GM12878 (cell line): ENCODE measurements at regions of chr1 and their contacts with region 1.

Region 1: DNA sequence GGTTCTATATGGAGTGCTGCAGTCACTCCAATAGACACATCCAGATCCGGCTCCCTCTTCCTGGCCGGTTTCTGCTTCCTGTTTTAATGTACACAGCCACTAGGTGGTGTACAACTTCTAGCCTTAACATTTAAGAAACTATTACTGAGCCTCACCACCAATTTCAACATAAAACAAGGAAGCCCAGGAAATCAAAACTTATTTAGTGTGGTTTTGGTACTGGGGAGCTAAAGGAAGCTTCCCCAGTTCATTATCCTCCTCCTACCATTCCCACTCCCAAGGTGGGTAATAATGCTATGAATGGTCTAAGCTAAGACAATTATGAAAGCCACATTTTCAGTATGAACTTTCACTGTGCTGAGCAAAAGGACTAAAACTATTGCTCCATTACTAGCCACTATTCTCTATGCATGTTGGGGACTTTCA is 25.5 kb upstream of the MTMR11 start:
- DNase-seq: peak; percentile 34
- ATAC-seq: peak; percentile 92
- H3K4me3 ChIP-seq: no peak overlapping the region
- H3K27ac ChIP-seq: peak overlapping the region; percentile 2
- H3K4me1 ChIP-seq: peaks cover 4% of the 10 kb centered on the region
- H3K27me3 ChIP-seq: no peaks in the 10 kb centered on the region
- CTCF ChIP-seq: peak; percentile 50 to 73 (median 71); a peak in 5 of 6 replicates
- EP300 ChIP-seq: no peak
- POLR2A ChIP-seq: no peak
- RAD21 ChIP-seq: peak; percentile 90

Region 2: GRCh38 chr1:149886396-149887195 is 75.5 kb before region 1 on chr1:
- CTCF ChIA-PET with region 1: interaction called, 20 read pairs
- POLR2A ChIA-PET with region 1: interaction called, 4 read pairs
- RAD21 ChIA-PET with region 1: interaction called, 6 read pairs
- SMC1A ChIA-PET with region 1: interaction called, 12 read pairs
- in situ Hi-C with region 1: no loop called
- intact Hi-C with region 1: no loop called
- DNase-seq: peak; percentile 99
- ATAC-seq: peak; percentile 73
- H3K4me3 ChIP-seq: peak overlapping the region; percentile 65
- H3K27ac ChIP-seq: peak overlapping the region; percentile 93
- H3K4me1 ChIP-seq: no peaks in the 10 kb centered on the region
- H3K27me3 ChIP-seq: no peaks in the 10 kb centered on the region
- CTCF ChIP-seq: no peak
- EP300 ChIP-seq: no peak
- POLR2A ChIP-seq: peak; percentile 70
- RAD21 ChIP-seq: no peak

Region 3: DNA sequence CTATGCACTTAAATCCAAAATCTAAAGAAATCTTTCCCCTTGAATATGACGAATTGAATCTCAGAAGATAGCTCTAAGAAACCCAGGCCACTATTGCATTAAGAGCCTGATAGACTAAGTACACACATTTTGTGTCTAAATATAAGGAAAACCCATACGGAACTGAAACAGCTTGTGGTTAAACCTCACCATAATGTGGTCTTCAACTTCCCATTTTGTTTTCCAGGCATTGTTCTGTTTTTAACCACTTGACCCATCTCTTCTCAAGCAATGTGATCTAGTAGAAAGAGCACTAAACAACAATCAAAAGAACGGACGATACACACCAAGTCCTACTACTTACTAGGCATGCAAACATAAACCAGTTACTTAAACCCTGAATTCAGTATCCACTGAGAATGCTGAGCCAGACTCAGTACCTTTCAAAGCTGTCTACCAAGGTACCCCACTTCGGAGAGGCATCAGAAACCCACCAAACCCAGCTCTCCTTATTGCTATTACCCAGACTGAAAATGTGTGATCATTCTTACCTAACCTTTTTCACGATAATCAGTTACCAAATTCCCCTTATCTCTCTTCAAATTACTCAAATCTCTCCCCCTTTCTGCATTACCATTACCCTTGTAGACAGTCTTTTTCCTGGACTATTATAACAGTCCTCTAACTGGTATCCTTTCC is 35.6 kb after region 1 on chr1:
- CTCF ChIA-PET with region 1: interaction called, 13 read pairs
- POLR2A ChIA-PET with region 1: interaction called, 3 read pairs
- RAD21 ChIA-PET with region 1: interaction called, 4 read pairs
- SMC1A ChIA-PET with region 1: interaction called, 10 read pairs
- in situ Hi-C with region 1: no loop called
- intact Hi-C with region 1: no loop called
- DNase-seq: peak; percentile 97
- ATAC-seq: peak; percentile 89
- H3K4me3 ChIP-seq: peak overlapping the region; percentile 39
- H3K27ac ChIP-seq: peak overlapping the region; percentile 55
- H3K4me1 ChIP-seq: peaks cover 31% of the 10 kb centered on the region; the same call in 1 of the 2 replicates
- H3K27me3 ChIP-seq: no peaks in the 10 kb centered on the region
- CTCF ChIP-seq: no peak
- EP300 ChIP-seq: peak; percentile 86 to 94; a peak in 3 of 4 replicates
- POLR2A ChIP-seq: no peak
- RAD21 ChIP-seq: no peak

Region 4: DNA sequence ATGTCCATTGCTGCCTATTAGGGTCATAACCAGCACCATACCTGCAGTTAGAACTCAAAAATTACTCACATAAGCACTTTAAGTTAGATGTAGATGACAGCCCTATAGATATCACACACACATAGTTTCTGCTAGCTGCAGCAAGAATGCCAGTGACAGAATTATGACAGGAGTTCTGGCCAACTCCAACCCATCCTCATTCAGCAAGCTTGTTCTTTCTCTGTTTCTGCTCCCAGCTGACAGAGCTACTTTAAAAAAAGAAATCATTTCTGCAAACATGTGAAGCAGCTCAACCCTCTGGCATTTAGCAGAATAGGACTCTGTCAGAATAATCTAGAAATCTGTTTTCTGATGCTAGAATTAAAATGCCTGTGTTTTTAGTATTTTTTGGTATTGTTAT is 72.2 kb after region 1 on chr1:
- CTCF ChIA-PET with region 1: interaction called, 22 read pairs
- POLR2A ChIA-PET with region 1: no interaction called
- RAD21 ChIA-PET with region 1: interaction called, 4 read pairs
- SMC1A ChIA-PET with region 1: interaction called, 5 read pairs
- in situ Hi-C with region 1: no loop called
- intact Hi-C with region 1: no loop called
- DNase-seq: no peak
- ATAC-seq: no peak
- H3K4me3 ChIP-seq: no peak overlapping the region
- H3K27ac ChIP-seq: no peak overlapping the region
- H3K4me1 ChIP-seq: no peaks in the 10 kb centered on the region
- H3K27me3 ChIP-seq: no peaks in the 10 kb centered on the region
- CTCF ChIP-seq: no peak
- EP300 ChIP-seq: no peak
- POLR2A ChIP-seq: no peak
- RAD21 ChIP-seq: no peak

Region 5: GRCh38 chr1:150067184-150068036 is 105.3 kb after region 1 on chr1 and contains the start of gene VPS45:
- CTCF ChIA-PET with region 1: interaction called, 8 read pairs
- POLR2A ChIA-PET with region 1: no interaction called
- RAD21 ChIA-PET with region 1: interaction called, 10 read pairs
- SMC1A ChIA-PET with region 1: interaction called, 9 read pairs
- in situ Hi-C with region 1: no loop called
- intact Hi-C with region 1: no loop called
- DNase-seq: peak; percentile 71
- ATAC-seq: peak; percentile 98
- H3K4me3 ChIP-seq: peak within 1 kb of the TSS; percentile 84
- H3K27ac ChIP-seq: peak within 1 kb of the TSS; percentile 97
- H3K4me1 ChIP-seq: peaks cover 9% of the 10 kb centered on the region; the same call in 1 of the 2 replicates
- H3K27me3 ChIP-seq: no peaks in the 10 kb centered on the region
- CTCF ChIP-seq: peak; percentile 34 to 44 (median 38); a peak in 4 of 6 replicates
- EP300 ChIP-seq: peak; percentile 13 to 36; a peak in 2 of 4 replicates
- POLR2A ChIP-seq: peak; percentile 86
- RAD21 ChIP-seq: 0 out of 2 replicates have a peak, but pooled peaks have one; percentile 18
- polyA plus RNA-seq, gene VPS45: 24.4 to 28.7 TPM

Region 6: GRCh38 chr1:150162862-150163706 is 200.9 kb after region 1 on chr1:
- CTCF ChIA-PET with region 1: interaction called, 35 read pairs
- POLR2A ChIA-PET with region 1: interaction called, 3 read pairs
- RAD21 ChIA-PET with region 1: interaction called, 19 read pairs
- SMC1A ChIA-PET with region 1: interaction called, 15 read pairs
- in situ Hi-C with region 1: loop called (anchors 5 kb)
- intact Hi-C with region 1: loop called (anchors 1 kb)
- DNase-seq: peak; percentile 97
- ATAC-seq: peak; percentile 66
- H3K4me3 ChIP-seq: peak overlapping the region; percentile 56
- H3K27ac ChIP-seq: peak overlapping the region; percentile 100
- H3K4me1 ChIP-seq: peaks cover 80% of the 10 kb centered on the region
- H3K27me3 ChIP-seq: no peaks in the 10 kb centered on the region
- CTCF ChIP-seq: no peak
- EP300 ChIP-seq: peak in 1 of 2 experiments; percentile 17; a peak in 1 of 4 replicates
- POLR2A ChIP-seq: peak; percentile 84
- RAD21 ChIP-seq: no peak

Region 7: GRCh38 chr1:150186789-150187559 is 224.8 kb after region 1 on chr1:
- CTCF ChIA-PET with region 1: interaction called, 25 read pairs
- POLR2A ChIA-PET with region 1: interaction called, 4 read pairs
- RAD21 ChIA-PET with region 1: interaction called, 16 read pairs
- SMC1A ChIA-PET with region 1: interaction called, 17 read pairs
- in situ Hi-C with region 1: no loop called
- intact Hi-C with region 1: loop called (anchors 5 kb)
- DNase-seq: no peak
- ATAC-seq: peak; percentile 91
- H3K4me3 ChIP-seq: no peak overlapping the region
- H3K27ac ChIP-seq: no peak overlapping the region; the same call in 1 of the 2 replicates
- H3K4me1 ChIP-seq: peaks cover 4% of the 10 kb centered on the region
- H3K27me3 ChIP-seq: no peaks in the 10 kb centered on the region
- CTCF ChIP-seq: peak; percentile 26 to 39 (median 38); a peak in 4 of 6 replicates
- EP300 ChIP-seq: peak; percentile 43 to 80; a peak in 3 of 4 replicates
- POLR2A ChIP-seq: no peak
- RAD21 ChIP-seq: peak; percentile 71

Region 8: DNA sequence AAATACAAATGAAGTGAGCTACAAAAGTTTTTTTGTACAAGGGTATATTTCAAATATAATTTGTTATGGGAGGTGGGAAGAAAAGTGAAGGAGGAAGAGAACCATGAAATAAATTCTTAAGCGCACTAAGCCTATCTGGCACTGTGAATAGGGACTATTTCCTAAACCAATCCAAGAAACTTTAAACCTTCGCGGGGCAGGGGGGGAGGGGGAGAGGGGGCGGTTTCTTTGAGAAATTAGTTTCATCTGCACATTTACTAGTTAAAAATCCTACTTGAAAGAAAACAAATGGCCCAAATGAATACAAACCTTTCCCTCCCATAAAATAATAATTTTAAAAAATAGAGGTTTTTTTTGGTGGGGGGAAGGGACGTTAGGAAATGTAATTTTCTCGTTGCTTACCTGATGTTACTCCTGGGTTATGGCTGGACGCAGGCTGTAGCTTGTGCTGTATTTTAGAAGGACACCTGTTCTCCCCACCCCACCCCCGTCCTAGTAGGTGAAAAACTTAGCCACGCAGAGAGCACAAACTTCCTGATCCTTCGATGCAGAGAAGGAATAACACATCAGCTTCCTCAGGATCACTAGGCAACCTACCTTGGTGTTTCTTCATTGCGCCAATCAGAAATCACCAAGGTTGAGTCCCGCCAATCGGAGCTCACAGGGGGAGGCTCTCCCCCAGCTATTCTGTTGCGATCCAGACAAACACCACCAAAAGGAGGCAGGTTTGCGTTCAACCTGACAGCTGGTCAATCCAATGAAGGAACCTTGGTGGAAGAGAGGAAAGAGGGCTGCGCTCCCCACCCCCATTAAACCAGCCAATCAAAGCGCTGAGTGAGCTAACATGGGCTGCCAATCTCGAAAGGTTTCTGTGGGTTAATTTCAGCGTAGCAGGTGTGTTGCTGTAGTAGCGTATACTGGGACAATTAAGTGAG is 734.7 kb after region 1 on chr1 and contains the start of gene GOLPH3L:
- CTCF ChIA-PET with region 1: no interaction called
- POLR2A ChIA-PET with region 1: no interaction called
- RAD21 ChIA-PET with region 1: no interaction called
- SMC1A ChIA-PET with region 1: no interaction called
- in situ Hi-C with region 1: no loop called
- intact Hi-C with region 1: no loop called
- DNase-seq: peak; percentile 99
- ATAC-seq: peak; percentile 100
- H3K4me3 ChIP-seq: peak within 1 kb of the TSS; percentile 72
- H3K27ac ChIP-seq: peak within 1 kb of the TSS; percentile 45
- H3K4me1 ChIP-seq: peaks cover 3% of the 10 kb centered on the region; the same call in 1 of the 2 replicates
- H3K27me3 ChIP-seq: no peaks in the 10 kb centered on the region
- CTCF ChIP-seq: no peak
- EP300 ChIP-seq: no peak
- POLR2A ChIP-seq: peak; percentile 36; the same call in 1 of the 2 replicates
- RAD21 ChIP-seq: no peak
- polyA plus RNA-seq, gene GOLPH3L: 11.8 to 12.1 TPM